Activated T-helper 1 cell treated with anti-CD3 and anti-CD28 coated beads, Interleukin-12 subunit alpha, Interleukin-12 subunit beta, Interleukin-2, Interleukin-4 antibody, amounts not matched to agents 30 ng/mL and 10 ng/mL and 1 ng/mL, durations not matched to agents 14 hours and 24 hours and 36 hours (primary cell): ENCODE measurements at regions of chr22 and their contacts with region 1.

Region 1: GRCh38 chr22:39532215-39533071 is at the start of gene RPS19BP1:
- DNase-seq: peak; percentile 99
- H3K4me3 Mint-ChIP-seq: peak within 1 kb of the TSS; percentile 96
- H3K27ac Mint-ChIP-seq: peak within 1 kb of the TSS; percentile 93
- H3K4me1 Mint-ChIP-seq: peaks cover 52% of the 10 kb centered on the region
- H3K27me3 Mint-ChIP-seq: no peaks in the 10 kb centered on the region
- total RNA-seq, gene RPS19BP1: 98.7 and 101 TPM in 2 replicates

Region 2: DNA sequence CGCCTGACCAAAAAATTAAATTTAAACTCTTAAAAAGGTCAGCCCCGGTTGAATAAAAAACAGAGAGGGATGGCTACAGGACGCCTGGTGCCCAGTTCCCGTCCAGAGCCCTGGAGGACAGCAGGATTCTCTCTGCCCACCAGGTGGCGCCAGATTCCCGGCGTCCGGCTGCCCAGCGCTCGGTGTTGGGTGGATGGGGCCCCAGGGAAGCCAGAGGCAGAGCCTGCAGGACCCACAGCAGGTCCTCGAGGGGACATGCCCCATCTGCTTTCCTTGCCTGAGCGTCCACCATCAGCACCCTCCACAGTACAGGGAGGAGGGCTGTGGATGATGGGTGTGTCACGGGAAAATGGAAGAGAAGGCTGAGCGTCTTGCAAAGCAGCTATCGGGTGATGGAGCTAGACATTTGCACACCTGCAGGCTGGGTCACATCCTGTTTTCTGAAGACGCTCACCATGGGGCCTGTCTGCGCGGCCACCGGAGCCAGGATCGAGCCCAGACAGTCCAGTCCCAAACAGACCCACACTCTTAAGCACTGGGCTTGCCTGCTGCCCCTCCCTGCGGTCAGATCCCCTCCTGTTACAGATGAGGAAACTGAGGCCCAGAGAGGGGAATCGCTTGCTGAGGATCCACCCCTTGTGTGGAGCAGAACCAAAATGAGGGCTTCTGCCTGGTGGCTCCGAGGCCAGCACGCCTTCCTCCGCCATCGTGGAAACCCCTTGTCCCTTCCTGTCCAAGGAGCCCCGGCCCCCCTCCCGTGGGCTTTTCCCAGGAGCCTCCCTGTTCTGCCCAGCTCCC is 361.4 kb before region 1 on chr22:
- intact Hi-C with region 1: loop called (anchors 5 kb)
- DNase-seq: peak; percentile 79
- H3K4me3 Mint-ChIP-seq: peak overlapping the region; percentile 75
- H3K27ac Mint-ChIP-seq: peak overlapping the region; percentile 63
- H3K4me1 Mint-ChIP-seq: peaks cover 40% of the 10 kb centered on the region
- H3K27me3 Mint-ChIP-seq: peaks cover 5% of the 10 kb centered on the region

Region 3: DNA sequence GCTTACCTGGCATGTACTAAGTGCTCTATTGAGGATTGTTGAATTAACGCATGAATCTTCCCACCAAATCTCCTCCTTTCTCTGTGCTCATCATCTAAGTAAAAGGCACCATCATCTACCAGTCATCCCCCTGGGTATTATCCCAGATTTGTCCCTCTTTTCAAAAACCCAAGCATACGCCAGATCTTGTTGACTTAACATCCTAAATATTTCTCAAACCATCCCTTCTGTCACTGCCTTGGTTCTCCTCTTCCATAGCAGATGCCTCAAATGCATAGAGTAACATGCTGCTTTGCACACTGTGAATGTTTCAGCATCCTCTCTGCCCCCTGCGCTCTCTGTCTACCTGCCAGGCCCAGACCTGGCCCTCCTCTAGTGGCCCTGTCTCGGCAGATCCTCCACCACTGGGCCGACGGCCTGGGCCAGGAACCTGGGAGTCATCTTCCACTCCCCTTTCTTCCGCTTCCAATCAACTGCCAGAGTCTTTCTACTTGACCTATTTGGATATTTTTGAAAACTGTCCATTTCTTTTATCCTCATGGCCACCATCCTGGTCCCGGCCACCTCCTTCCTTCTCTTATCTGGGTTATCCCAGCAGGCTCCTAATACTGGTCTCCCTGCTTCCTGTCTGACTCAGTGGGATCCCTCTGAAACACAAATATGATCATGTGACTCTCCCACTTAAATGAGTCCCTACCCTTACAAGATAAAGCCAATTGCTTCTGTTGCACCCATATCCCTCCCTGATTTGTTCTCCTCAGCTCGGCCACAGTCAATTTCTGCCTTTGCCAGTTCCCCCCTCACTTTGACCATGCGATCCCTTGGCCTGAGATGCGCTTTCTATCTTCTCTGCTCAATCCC is 136.3 kb before region 1 on chr22:
- intact Hi-C with region 1: loop called (anchors 1 kb)
- DNase-seq: no peak
- H3K4me3 Mint-ChIP-seq: no peak overlapping the region
- H3K27ac Mint-ChIP-seq: no peak overlapping the region
- H3K4me1 Mint-ChIP-seq: peaks cover 2% of the 10 kb centered on the region
- H3K27me3 Mint-ChIP-seq: peaks cover 6% of the 10 kb centered on the region

Region 4: DNA sequence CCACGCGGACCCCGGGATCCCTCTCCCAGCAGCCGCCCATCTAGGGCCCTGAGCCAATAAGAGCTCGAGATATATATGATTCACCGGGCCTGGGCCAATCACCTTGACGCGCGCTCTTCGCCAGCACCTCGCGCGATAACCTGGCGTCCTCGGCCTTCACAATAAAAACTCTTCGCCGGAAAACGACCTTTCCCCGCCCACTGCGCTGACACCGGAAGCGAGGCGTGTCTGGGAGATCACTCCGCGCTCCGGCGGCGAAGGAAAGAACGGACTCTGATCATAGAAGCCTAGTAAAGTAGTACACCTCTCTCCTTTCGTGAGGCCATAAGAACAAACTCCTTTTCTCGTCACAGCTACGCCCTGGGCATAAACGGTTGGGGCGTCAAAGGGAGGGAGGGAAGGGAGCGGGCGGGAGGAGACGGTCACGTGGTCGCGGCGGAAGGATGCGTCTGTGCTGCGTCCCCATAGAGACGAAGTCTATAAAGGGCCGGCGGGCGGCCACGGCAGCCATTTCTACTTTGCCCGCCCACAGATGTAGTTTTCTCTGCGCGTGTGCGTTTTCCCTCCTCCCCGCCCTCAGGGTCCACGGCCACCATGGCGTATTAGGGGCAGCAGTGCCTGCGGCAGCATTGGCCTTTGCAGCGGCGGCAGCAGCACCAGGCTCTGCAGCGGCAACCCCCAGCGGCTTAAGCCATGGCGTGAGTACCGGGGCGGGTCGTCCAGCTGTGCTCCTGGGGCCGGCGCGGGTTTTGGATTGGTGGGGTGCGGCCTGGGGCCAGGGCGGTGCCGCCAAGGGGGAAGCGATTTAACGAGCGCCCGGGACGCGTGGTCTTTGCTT is 12.2 kb before region 1 on chr22 and contains the start of gene ATF4:
- intact Hi-C with region 1: loop called (anchors 1 kb)
- DNase-seq: peak; percentile 96
- H3K4me3 Mint-ChIP-seq: peak within 1 kb of the TSS; percentile 97
- H3K27ac Mint-ChIP-seq: peak within 1 kb of the TSS; percentile 100
- H3K4me1 Mint-ChIP-seq: peaks cover 60% of the 10 kb centered on the region
- H3K27me3 Mint-ChIP-seq: peaks cover 2% of the 10 kb centered on the region
- total RNA-seq, gene ATF4: 387 and 390 TPM in 2 replicates

Region 5: GRCh38 chr22:40024201-40025061 is 492.0 kb after region 1 on chr22:
- intact Hi-C with region 1: loop called (anchors 1 kb)
- DNase-seq: peak; percentile 39
- H3K4me3 Mint-ChIP-seq: no peak overlapping the region
- H3K27ac Mint-ChIP-seq: no peak overlapping the region
- H3K4me1 Mint-ChIP-seq: no peaks in the 10 kb centered on the region
- H3K27me3 Mint-ChIP-seq: no peaks in the 10 kb centered on the region

Region 6: GRCh38 chr22:40346178-40347118 is 814.0 kb after region 1 on chr22 and contains the start of gene ADSL:
- intact Hi-C with region 1: loop called (anchors 1 kb)
- DNase-seq: peak; percentile 83
- H3K4me3 Mint-ChIP-seq: peak within 1 kb of the TSS; percentile 94
- H3K27ac Mint-ChIP-seq: peak within 1 kb of the TSS; percentile 97
- H3K4me1 Mint-ChIP-seq: peaks cover 40% of the 10 kb centered on the region
- H3K27me3 Mint-ChIP-seq: no peaks in the 10 kb centered on the region
- total RNA-seq, gene ADSL: 156 and 160 TPM in 2 replicates